ENCODE measurements at regions of chr1 and their contacts with region 1.

Region 1: DNA sequence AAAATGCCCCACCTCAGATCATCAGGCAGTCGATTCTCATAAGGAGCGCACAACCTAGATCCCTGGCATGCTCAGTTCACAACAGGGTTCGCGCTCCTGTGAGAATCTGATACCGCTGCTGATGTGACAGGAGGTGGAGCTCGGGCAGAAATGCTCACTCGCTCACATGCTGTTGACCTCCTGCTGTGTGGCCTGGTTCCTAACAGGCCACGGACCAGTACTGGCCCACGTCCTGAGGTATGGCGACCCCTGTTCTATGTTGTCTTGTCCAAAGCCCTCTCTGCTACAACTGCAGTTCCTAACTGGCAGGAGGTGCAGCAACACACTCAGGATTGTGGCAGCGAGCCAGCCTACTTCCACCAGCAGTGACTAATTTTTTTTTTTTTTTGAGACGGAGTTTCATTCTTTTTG is 70.6 kb downstream of the CLSTN1 start:
- DNase-seq: peak in 4 of 5 donors; percentile 48 to 68 (median 59)
- H3K4me3 ChIP-seq: no peak overlapping the region
- H3K27ac ChIP-seq: no peak overlapping the region
- H3K4me1 ChIP-seq: no peaks in the 10 kb centered on the region
- H3K27me3 ChIP-seq: no peaks in the 10 kb centered on the region
- CTCF ChIP-seq: no peak
- EP300 ChIP-seq: no peak
- POLR2A ChIP-seq: no peak

Region 2: DNA sequence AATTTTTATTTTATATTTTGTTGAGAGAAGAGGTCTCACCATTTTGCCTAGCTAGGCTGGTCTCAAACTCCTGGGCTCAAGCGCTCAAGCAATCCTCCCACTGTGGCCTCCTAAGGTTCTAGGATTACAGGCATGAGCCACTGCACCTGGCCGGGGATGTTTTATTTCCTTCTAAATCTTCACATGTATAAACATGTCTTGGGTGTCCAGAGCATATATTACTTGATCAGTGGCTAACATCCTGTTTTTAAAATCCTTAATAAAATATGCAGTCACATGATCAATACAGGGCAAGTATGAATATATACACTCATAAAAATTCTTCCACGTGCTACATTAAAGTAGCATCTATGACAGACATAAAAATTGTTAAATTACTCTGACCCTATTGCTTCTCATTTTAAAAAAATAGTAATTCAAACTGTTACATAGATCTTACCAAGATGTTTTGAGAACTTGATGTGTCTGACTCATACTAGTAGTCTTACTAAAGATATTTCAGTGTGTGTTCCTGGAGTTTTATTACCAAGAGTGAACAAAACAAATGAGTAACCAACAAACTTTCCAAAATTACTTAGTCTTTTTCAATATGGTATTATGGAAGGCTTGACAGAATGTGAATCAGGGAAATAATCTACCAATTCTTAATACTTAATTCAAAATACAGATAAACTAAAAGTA is 1212.7 kb before region 1 on chr1:
- intact Hi-C with region 1: no loop called
- DNase-seq: no peak
- H3K4me3 ChIP-seq: no peak overlapping the region
- H3K27ac ChIP-seq: peak overlapping the region in 1 of 2 donors; percentile 12
- H3K4me1 ChIP-seq: peaks cover 6% of the 10 kb centered on the region
- H3K27me3 ChIP-seq: no peaks in the 10 kb centered on the region
- CTCF ChIP-seq: no peak
- EP300 ChIP-seq: no peak
- POLR2A ChIP-seq: no peak

Region 3: GRCh38 chr1:9201401-9202239 is 551.5 kb before region 1 on chr1:
- intact Hi-C with region 1: loop called in 1 of 4 experiments (anchors 5 kb)
- DNase-seq: peak; percentile 44 to 64 (median 50)
- H3K4me3 ChIP-seq: peak overlapping the region; percentile 31
- H3K27ac ChIP-seq: no peak overlapping the region
- H3K4me1 ChIP-seq: peaks cover 5% of the 10 kb centered on the region
- H3K27me3 ChIP-seq: no peaks in the 10 kb centered on the region
- CTCF ChIP-seq: no peak
- EP300 ChIP-seq: no peak
- POLR2A ChIP-seq: no peak

Region 4: GRCh38 chr1:9823943-9824701 is 71.0 kb after region 1 on chr1 and contains the start of gene CLSTN1:
- intact Hi-C with region 1: no loop called
- DNase-seq: peak; percentile 93 to 95 (median 94)
- H3K4me3 ChIP-seq: peak within 1 kb of the TSS; percentile 94
- H3K27ac ChIP-seq: peak within 1 kb of the TSS; percentile 84 to 93
- H3K4me1 ChIP-seq: no peaks in the 10 kb centered on the region
- H3K27me3 ChIP-seq: no peaks in the 10 kb centered on the region
- CTCF ChIP-seq: no peak
- EP300 ChIP-seq: no peak
- POLR2A ChIP-seq: peak; percentile 46
- total RNA-seq, gene CLSTN1: 70.5 to 145 (median 119) TPM